CD4-positive, alpha-beta T cell (primary cell): ENCODE measurements at regions of chr18 and their contacts with region 1.

Region 1: DNA sequence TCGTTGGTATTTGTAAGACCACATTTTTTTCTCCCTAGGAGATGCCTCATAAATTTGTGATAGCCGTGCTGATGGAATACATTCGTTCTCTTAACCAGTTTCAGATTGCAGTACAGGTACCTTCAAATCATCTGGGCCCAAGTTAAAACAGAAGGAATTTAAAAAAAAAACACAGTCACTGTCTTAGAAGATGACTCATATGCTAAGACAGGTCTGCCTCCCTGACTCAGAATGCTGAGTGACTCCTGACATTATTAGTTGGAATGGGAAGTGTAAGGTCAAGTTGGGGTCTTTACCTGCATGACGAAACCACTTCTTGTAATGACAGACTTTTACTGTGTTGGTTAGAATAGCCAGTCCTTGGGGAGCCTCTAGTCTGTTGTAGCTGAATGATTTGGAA is 26.3 kb downstream of the RMC1 start:
- DNase-seq: no peak
- ATAC-seq: no peak
- H3K4me3 ChIP-seq: no peak overlapping the region
- H3K4me3 Mint-ChIP-seq: no peak overlapping the region
- H3K27ac ChIP-seq: no peak overlapping the region
- H3K27ac Mint-ChIP-seq: no peak overlapping the region
- H3K4me1 ChIP-seq: no peaks in the 10 kb centered on the region
- H3K4me1 Mint-ChIP-seq: no peaks in the 10 kb centered on the region
- H3K27me3 ChIP-seq: no peaks in the 10 kb centered on the region
- H3K27me3 Mint-ChIP-seq: no peaks in the 10 kb centered on the region
- CTCF ChIP-seq: no peak

Region 2: DNA sequence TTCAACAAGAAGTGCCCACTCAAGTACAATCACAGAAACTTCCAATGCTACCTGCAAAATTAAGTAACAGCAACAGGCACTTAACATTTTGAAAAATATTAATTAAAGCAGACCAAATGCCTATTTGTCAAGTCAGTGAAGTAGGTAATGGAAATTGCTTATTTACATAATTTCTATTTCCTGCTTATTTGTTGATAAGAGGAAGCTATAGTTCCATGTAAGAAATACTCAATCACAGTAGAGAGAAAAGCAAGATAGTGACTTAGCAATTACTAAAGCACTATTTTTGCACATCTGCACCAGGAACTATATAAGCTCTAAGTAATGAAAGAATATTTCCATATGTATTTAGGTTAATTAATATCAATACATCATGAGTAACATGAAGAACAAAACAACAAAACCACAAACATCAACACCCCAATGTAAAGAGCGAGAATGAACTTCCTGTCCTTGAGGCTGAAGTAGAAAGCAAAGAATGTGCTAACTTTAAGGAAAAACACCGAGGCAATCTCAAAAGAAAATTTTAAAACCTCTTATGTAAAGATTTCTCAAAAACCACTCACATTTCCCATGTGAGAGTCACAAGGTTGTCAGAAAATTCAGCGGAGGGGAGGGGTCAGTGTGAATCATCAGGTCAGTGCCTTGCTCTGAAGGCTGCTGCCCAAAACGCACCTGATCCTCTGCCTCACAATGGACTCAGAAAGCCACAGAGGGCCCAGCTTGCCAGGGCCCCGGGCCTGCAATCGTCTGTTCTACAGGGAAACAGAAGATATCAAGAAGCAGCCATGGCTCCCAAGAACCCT is 44.2 kb after region 1 on chr18:
- CTCF ChIA-PET with region 1: no interaction called
- POLR2A ChIA-PET with region 1: interaction called, 3 read pairs
- intact Hi-C with region 1: loop called in 1 of 2 experiments (anchors 5 kb)
- DNase-seq: peak in 6 of 14 experiments; percentile 11 to 71 (median 60)
- ATAC-seq: peak; percentile 46
- H3K4me3 ChIP-seq: peak overlapping the region; percentile 11
- H3K4me3 Mint-ChIP-seq: peak overlapping the region; percentile 7
- H3K27ac ChIP-seq: peak overlapping the region; percentile 51 to 87
- H3K27ac Mint-ChIP-seq: peak overlapping the region; percentile 81
- H3K4me1 ChIP-seq: peaks cover 51% of the 10 kb centered on the region
- H3K4me1 Mint-ChIP-seq: peaks cover 41% of the 10 kb centered on the region
- H3K27me3 ChIP-seq: no peaks in the 10 kb centered on the region
- H3K27me3 Mint-ChIP-seq: no peaks in the 10 kb centered on the region
- CTCF ChIP-seq: no peak

Region 3: DNA sequence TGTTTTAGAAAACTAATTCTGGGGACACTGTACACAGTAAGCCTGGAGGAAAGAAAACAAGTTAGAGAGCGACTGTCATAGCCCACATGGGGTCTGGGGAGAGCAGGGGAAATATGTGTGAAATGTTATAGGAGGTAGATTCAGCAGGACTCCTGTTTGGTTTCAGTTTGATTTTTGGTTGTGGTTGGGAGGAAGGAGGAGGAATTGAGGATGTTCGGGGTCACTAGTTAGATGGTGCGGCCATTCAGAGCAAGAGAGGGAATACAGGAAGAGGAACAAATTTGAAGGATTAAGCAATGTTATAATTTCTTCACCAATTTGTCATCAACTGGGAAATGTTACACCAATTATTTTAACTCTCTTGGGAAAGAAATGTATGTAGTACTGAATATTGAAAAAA is 510.1 kb after region 1 on chr18:
- CTCF ChIA-PET with region 1: no interaction called
- POLR2A ChIA-PET with region 1: no interaction called
- intact Hi-C with region 1: no loop called
- DNase-seq: peak in 1 of 14 experiments; percentile 23
- ATAC-seq: no peak
- H3K4me3 ChIP-seq: no peak overlapping the region
- H3K4me3 Mint-ChIP-seq: peak overlapping the region; percentile 1
- H3K27ac ChIP-seq: no peak overlapping the region
- H3K27ac Mint-ChIP-seq: peak overlapping the region; percentile 18
- H3K4me1 ChIP-seq: peaks cover 68% of the 10 kb centered on the region
- H3K4me1 Mint-ChIP-seq: peaks cover 96% of the 10 kb centered on the region
- H3K27me3 ChIP-seq: no peaks in the 10 kb centered on the region
- H3K27me3 Mint-ChIP-seq: no peaks in the 10 kb centered on the region
- CTCF ChIP-seq: no peak